ENCODE measurements at regions of chr10 and their contacts with region 1.

Region 1: GRCh38 chr10:124732931-124733570 is 11.1 kb downstream of the FAM53B start:
- DNase-seq: no peak
- ATAC-seq: no peak
- H3K4me3 ChIP-seq: no peak overlapping the region
- H3K27ac ChIP-seq: peak overlapping the region in 1 of 4 donors; percentile 11
- H3K4me1 ChIP-seq: peaks cover 40% of the 10 kb centered on the region
- H3K27me3 ChIP-seq: no peaks in the 10 kb centered on the region
- CTCF ChIP-seq: no peak
- POLR2A ChIP-seq: no peak

Region 2: DNA sequence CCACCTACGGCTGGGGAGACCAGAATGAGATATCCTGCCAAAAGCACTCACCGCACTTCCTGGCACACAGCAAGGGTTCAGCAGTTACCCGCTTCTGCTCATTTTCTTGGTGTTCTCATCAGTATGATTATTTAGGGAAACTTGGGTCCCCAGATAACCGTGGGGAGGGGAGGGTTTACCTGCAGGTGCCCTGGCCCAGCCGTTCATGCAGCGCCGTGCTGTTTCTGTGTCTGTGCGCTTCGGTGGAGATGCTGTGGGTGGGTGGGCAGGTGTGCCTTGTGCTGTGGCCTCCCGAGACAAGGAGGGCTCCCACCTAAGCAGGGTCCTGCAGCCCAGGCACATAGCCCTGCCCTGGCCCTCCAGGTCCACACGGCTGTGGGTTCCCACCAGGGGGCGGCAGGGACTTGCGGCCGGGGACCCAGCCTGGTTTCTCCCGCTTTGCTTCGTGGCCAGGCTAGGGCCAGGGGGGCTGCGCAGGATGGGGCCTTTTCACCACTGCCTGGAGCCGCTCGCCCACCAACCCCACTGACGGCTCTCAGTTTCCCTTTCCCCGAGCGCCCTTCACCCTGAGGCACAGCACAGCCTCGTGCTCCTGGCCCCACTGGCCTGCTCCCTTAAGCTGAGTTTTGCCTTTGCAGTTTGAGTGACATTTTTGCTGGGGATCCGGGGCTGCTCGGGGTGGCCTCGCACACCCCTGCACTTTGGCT is 193.0 kb before region 1 on chr10:
- intact Hi-C with region 1: loop called (anchors 5 kb)
- DNase-seq: peak in 3 of 4 donors; percentile 52 to 62 (median 52)
- ATAC-seq: no peak
- H3K4me3 ChIP-seq: no peak overlapping the region
- H3K27ac ChIP-seq: no peak overlapping the region
- H3K4me1 ChIP-seq: peaks cover 6% of the 10 kb centered on the region
- H3K27me3 ChIP-seq: no peaks in the 10 kb centered on the region
- CTCF ChIP-seq: peak; percentile 48 to 61 (median 54)
- POLR2A ChIP-seq: no peak

Region 3: GRCh38 chr10:124626759-124627380 is 106.2 kb before region 1 on chr10:
- intact Hi-C with region 1: loop called (anchors 10 kb)
- DNase-seq: peak in 1 of 4 donors; percentile 43
- ATAC-seq: peak; percentile 46
- H3K4me3 ChIP-seq: no peak overlapping the region
- H3K27ac ChIP-seq: no peak overlapping the region
- H3K4me1 ChIP-seq: peaks cover 27% of the 10 kb centered on the region
- H3K27me3 ChIP-seq: no peaks in the 10 kb centered on the region
- CTCF ChIP-seq: no peak
- POLR2A ChIP-seq: no peak

Measured in body of pancreas (tissue), 4 donors.